Activated CD8-positive, alpha-beta T cell treated with anti-CD3 and anti-CD28 coated beads for 36 hours (primary cell): ENCODE measurements at regions of chr2 and their contacts with region 1.

Region 1: DNA sequence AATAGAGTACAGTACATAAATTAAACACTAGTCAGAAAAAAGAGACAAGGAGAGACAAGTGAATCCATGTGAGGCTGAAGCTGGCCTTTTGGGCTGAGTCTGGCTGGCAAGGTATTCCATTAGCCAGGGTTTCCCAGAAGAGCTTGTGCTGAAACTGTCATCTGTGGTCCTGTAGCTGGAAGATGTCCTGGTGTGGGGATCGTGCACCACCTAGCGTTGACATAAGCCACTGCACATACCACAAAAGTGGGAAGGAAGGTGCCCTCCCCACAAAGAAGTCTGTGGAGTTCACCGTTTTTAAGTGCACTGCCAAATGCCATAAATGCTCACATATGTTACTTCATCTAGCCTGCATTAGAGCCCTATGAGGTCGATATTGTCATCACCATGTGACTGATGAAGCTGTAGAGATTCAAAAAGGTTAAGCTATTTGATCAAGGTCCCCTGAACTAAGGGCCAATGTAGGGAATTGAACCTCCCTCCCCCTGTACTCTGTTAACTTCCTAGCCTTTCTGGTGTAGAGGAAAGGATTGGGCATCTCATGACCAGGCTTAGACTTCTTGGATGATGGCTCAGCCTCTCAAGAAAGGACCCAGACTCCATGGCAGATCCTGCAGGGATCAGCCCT is 31.9 kb upstream of the GALNT14 start:
- DNase-seq: peak; percentile 64
- ATAC-seq: peak; percentile 93
- H3K4me3 Mint-ChIP-seq: no peak overlapping the region
- H3K27ac Mint-ChIP-seq: no peak overlapping the region
- H3K4me1 Mint-ChIP-seq: no peaks in the 10 kb centered on the region
- H3K27me3 Mint-ChIP-seq: peaks cover 3% of the 10 kb centered on the region
- CTCF ChIP-seq: peak; percentile 90

Region 2: DNA sequence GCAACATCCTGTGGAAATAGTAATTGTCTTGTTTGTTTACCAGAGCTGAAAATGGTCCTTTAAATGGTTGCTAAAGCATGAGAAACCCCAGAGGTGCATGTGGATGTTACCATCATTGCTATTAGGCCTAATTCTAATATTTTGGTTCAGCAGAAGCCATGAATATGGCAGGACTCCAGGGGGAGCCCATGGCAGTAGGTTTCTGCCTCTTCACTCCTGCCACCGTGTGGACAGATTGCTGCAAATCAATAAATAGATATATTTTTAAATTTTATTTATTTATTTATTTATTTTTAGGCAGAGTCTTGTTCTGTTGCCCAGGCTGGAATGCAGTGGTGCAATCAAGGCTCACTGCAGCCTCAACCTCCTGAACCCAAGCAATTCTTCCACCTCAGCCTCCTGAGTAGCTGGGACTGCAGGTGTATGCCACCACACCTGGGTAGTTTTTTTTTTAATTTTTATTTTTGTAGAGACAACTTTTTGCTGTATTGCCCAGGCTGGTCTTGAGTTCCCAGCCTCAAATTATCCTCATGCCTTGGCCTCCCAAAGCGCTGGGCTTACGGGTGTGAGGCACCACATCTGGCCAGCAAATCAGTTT is 308.0 kb before region 1 on chr2:
- CTCF ChIA-PET with region 1: interaction called, 38 read pairs
- POLR2A ChIA-PET with region 1: no interaction called
- intact Hi-C with region 1: no loop called
- DNase-seq: peak; percentile 71
- ATAC-seq: peak; percentile 47
- H3K4me3 Mint-ChIP-seq: no peak overlapping the region
- H3K27ac Mint-ChIP-seq: no peak overlapping the region
- H3K4me1 Mint-ChIP-seq: no peaks in the 10 kb centered on the region
- H3K27me3 Mint-ChIP-seq: peaks cover 3% of the 10 kb centered on the region
- CTCF ChIP-seq: peak; percentile 92

Region 3: GRCh38 chr2:31033032-31033431 is 137.2 kb before region 1 on chr2:
- CTCF ChIA-PET with region 1: interaction called, 11 read pairs
- POLR2A ChIA-PET with region 1: no interaction called
- intact Hi-C with region 1: no loop called
- DNase-seq: no peak
- ATAC-seq: no peak
- H3K4me3 Mint-ChIP-seq: no peak overlapping the region
- H3K27ac Mint-ChIP-seq: no peak overlapping the region
- H3K4me1 Mint-ChIP-seq: no peaks in the 10 kb centered on the region
- H3K27me3 Mint-ChIP-seq: no peaks in the 10 kb centered on the region
- CTCF ChIP-seq: no peak

Region 4: DNA sequence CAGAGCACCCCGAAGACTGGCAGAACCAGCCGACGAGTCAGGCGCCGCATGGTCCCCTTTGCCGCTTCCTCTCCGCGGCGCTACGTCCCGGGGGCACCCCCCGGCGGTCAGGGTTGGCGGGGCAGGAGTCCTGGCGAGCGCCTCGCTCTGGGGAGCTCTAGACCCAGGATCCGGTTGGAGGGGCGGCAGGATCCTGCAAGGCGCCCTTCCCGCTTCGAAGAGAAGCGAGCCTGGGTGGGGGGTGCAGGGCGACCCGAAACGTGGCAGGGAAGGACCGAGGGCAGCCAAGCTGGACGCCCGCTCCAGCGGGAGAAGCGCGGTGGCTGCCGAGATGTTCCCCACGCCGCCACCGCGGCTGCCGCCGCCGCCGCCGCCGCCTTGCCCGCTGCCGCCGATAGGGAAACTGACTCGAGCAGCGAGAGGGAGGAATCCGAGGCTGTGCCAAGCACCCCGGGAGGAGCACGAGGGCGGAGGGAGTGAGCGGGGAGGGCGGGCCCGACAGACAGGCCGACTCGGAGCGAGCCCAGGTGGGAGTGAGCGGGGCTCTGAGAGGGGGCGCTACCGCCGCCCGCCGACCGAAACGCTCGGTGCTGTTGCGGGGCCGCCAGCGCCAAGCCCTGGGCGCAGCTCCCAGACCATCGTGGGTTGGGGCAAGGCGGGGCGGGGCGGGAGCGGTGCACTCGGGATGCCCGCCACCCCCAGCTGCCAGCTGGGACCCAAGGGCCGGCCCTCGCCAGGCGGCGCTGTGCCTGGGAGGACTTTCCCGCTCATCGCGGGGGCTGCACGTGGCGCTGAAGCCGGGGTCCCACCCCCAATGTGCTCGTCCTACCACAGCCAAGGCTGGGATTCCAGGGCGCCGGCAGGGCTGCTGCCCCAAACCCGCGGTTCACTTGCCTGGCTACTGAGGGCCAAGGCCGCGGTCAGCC is 31.9 kb before region 1 on chr2 and contains the start of gene GALNT14:
- CTCF ChIA-PET with region 1: interaction called, 10 read pairs
- POLR2A ChIA-PET with region 1: no interaction called
- intact Hi-C with region 1: no loop called
- DNase-seq: peak; percentile 68
- ATAC-seq: peak; percentile 85
- H3K4me3 Mint-ChIP-seq: peak within 1 kb of the TSS; percentile 67
- H3K27ac Mint-ChIP-seq: peak within 1 kb of the TSS; percentile 62
- H3K4me1 Mint-ChIP-seq: peaks cover 8% of the 10 kb centered on the region
- H3K27me3 Mint-ChIP-seq: peaks cover 51% of the 10 kb centered on the region
- CTCF ChIP-seq: peak; percentile 58
- total RNA-seq, gene GALNT14: 1.1 to 1.9 TPM

Region 5: DNA sequence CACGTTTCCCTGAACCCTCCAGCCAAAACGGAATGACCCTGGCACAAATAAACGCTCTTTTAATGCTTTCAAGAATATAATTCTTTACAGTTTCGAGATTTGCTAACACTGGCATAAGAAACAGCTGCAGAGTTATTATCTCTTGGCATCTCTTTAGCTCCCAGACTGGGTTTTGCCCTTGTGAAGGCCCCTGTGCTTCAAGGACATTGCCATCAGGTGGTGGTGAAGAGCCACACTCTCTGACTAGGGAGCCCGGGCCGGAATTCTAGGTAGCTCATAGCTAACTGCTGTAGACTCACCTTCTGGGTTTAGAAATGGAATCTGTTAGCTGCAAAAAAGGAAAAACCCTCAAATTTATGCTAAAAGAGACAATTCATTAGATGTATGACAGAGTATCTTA is 18.7 kb before region 1 on chr2:
- CTCF ChIA-PET with region 1: interaction called, 17 read pairs
- POLR2A ChIA-PET with region 1: no interaction called
- intact Hi-C with region 1: no loop called
- DNase-seq: no peak
- ATAC-seq: no peak
- H3K4me3 Mint-ChIP-seq: no peak overlapping the region
- H3K27ac Mint-ChIP-seq: no peak overlapping the region
- H3K4me1 Mint-ChIP-seq: no peaks in the 10 kb centered on the region
- H3K27me3 Mint-ChIP-seq: no peaks in the 10 kb centered on the region
- CTCF ChIP-seq: no peak

Region 6: GRCh38 chr2:31319406-31320175 is 149.4 kb after region 1 on chr2:
- CTCF ChIA-PET with region 1: interaction called, 4 read pairs
- POLR2A ChIA-PET with region 1: no interaction called
- intact Hi-C with region 1: loop called (anchors 10 kb)
- DNase-seq: peak; percentile 42
- ATAC-seq: peak; percentile 70
- H3K4me3 Mint-ChIP-seq: no peak overlapping the region
- H3K27ac Mint-ChIP-seq: peak overlapping the region; percentile 39
- H3K4me1 Mint-ChIP-seq: peaks cover 59% of the 10 kb centered on the region
- H3K27me3 Mint-ChIP-seq: no peaks in the 10 kb centered on the region
- CTCF ChIP-seq: no peak

Region 7: GRCh38 chr2:31333527-31334183 is 163.5 kb after region 1 on chr2:
- CTCF ChIA-PET with region 1: interaction called, 33 read pairs
- POLR2A ChIA-PET with region 1: no interaction called
- intact Hi-C with region 1: loop called (anchors 10 kb)
- DNase-seq: peak; percentile 87
- ATAC-seq: peak; percentile 95
- H3K4me3 Mint-ChIP-seq: no peak overlapping the region
- H3K27ac Mint-ChIP-seq: no peak overlapping the region
- H3K4me1 Mint-ChIP-seq: no peaks in the 10 kb centered on the region
- H3K27me3 Mint-ChIP-seq: no peaks in the 10 kb centered on the region
- CTCF ChIP-seq: peak; percentile 88